HEK293 (cell line): ENCODE measurements at regions of chr2 and their contacts with region 1.

Region 1: DNA sequence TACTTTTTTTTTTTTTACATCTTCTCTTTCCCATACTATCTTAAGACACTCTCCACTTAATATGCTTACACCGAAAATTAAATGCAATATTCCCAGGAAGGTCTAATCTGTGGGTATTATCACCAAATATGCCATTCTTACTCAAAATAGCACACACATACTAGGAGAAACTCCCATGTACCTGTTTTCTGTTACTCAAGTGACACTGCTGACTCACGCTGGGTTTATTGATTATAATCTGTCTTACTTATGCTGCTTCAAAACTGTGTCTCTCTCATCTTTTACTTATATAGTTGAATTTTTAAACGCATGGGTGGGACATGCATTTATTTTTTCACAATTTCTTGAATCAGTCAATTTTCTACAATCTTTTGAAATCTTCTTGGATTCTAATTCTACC is 29.9 kb downstream of the MRPL19 start:
- H3K4me3 ChIP-seq: no peak overlapping the region
- H3K27ac ChIP-seq: no peak overlapping the region
- H3K4me1 ChIP-seq: no peaks in the 10 kb centered on the region
- CTCF ChIP-seq: no peak

Region 2: GRCh38 chr2:75595551-75596395 is 80.7 kb before region 1 on chr2:
- CTCF ChIA-PET with region 1: interaction called, 10 read pairs
- POLR2A ChIA-PET with region 1: no interaction called
- H3K4me3 ChIP-seq: no peak overlapping the region
- H3K27ac ChIP-seq: no peak overlapping the region
- H3K4me1 ChIP-seq: no peaks in the 10 kb centered on the region
- CTCF ChIP-seq: no peak

Region 3: GRCh38 chr2:75634945-75635344 is 41.5 kb before region 1 on chr2:
- CTCF ChIA-PET with region 1: interaction called, 45 read pairs
- POLR2A ChIA-PET with region 1: no interaction called
- H3K4me3 ChIP-seq: no peak overlapping the region
- H3K27ac ChIP-seq: no peak overlapping the region
- H3K4me1 ChIP-seq: no peaks in the 10 kb centered on the region
- CTCF ChIP-seq: no peak

Region 4: GRCh38 chr2:75640621-75641121 is 35.8 kb before region 1 on chr2:
- CTCF ChIA-PET with region 1: interaction called, 45 read pairs
- POLR2A ChIA-PET with region 1: no interaction called
- H3K4me3 ChIP-seq: no peak overlapping the region
- H3K27ac ChIP-seq: no peak overlapping the region
- H3K4me1 ChIP-seq: no peaks in the 10 kb centered on the region
- CTCF ChIP-seq: peak; percentile 75

Region 5: GRCh38 chr2:75688196-75688595 is 11.7 kb after region 1 on chr2:
- CTCF ChIA-PET with region 1: interaction called, 13 read pairs
- POLR2A ChIA-PET with region 1: no interaction called
- H3K4me3 ChIP-seq: no peak overlapping the region
- H3K27ac ChIP-seq: no peak overlapping the region
- H3K4me1 ChIP-seq: no peaks in the 10 kb centered on the region
- CTCF ChIP-seq: no peak

Region 6: GRCh38 chr2:75698918-75699317 is 22.5 kb after region 1 on chr2:
- CTCF ChIA-PET with region 1: interaction called, 10 read pairs
- POLR2A ChIA-PET with region 1: no interaction called
- H3K4me3 ChIP-seq: no peak overlapping the region
- H3K27ac ChIP-seq: no peak overlapping the region
- H3K4me1 ChIP-seq: 0 out of 2 replicates have a peak, but pooled peaks cover 3% of the 10 kb centered on the region
- CTCF ChIP-seq: no peak

Region 7: DNA sequence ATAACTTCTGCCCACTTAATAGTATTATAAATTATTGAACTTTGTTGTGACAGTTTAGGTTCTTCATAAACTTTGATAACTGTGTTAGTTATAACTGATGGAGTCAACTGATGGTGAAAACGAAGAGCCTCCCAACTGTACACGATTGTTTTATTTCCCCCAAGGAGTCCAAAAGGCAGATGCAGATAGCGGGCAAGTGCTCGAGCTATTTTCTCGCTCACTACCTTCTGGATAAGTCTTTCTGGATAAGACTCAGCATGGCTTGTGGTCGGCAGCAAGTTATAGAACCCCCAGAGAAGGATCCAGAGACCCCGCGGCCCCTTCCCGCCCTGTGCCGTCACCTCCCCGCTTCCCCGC is 33.7 kb after region 1 on chr2:
- CTCF ChIA-PET with region 1: interaction called, 15 read pairs
- POLR2A ChIA-PET with region 1: interaction called, 3 read pairs
- H3K4me3 ChIP-seq: peak overlapping the region; percentile 66
- H3K27ac ChIP-seq: peak overlapping the region; percentile 98
- H3K4me1 ChIP-seq: peaks cover 4% of the 10 kb centered on the region
- CTCF ChIP-seq: no peak